B cell (primary cell): ENCODE measurements at regions of chr11 and their contacts with region 1.

Region 1: GRCh38 chr11:18395735-18396504 is 1.6 kb downstream of the LDHA start:
- DNase-seq: peak; percentile 98
- ATAC-seq: peak; percentile 78
- H3K4me3 ChIP-seq: peak overlapping the region; percentile 72 to 96 (median 92)
- H3K4me3 Mint-ChIP-seq: peak overlapping the region; percentile 98
- H3K27ac ChIP-seq: peak overlapping the region; percentile 48 to 71
- H3K27ac Mint-ChIP-seq: peak overlapping the region; percentile 94
- H3K4me1 ChIP-seq: peaks cover 11 to 15% of the 10 kb centered on the region in 2 donors
- H3K4me1 Mint-ChIP-seq: peaks cover 28% of the 10 kb centered on the region
- H3K27me3 ChIP-seq: no peaks in the 10 kb centered on the region
- H3K27me3 Mint-ChIP-seq: no peaks in the 10 kb centered on the region
- CTCF ChIP-seq: no peak

Region 2: GRCh38 chr11:18012863-18013781 is 382.8 kb before region 1 on chr11 and contains the start of gene SERGEF:
- CTCF ChIA-PET with region 1: no interaction called
- POLR2A ChIA-PET with region 1: no interaction called
- intact Hi-C with region 1: loop called (anchors 1 kb)
- DNase-seq: peak; percentile 95
- ATAC-seq: peak; percentile 90
- H3K4me3 ChIP-seq: peak within 1 kb of the TSS; percentile 77 to 90 (median 83)
- H3K4me3 Mint-ChIP-seq: peak within 1 kb of the TSS; percentile 100
- H3K27ac ChIP-seq: peak within 1 kb of the TSS; percentile 61 to 65
- H3K27ac Mint-ChIP-seq: peak within 1 kb of the TSS; percentile 99
- H3K4me1 ChIP-seq: peaks cover 9 to 21% of the 10 kb centered on the region in 2 donors
- H3K4me1 Mint-ChIP-seq: peaks cover 27% of the 10 kb centered on the region
- H3K27me3 ChIP-seq: no peaks in the 10 kb centered on the region
- H3K27me3 Mint-ChIP-seq: no peaks in the 10 kb centered on the region
- CTCF ChIP-seq: no peak
- total RNA-seq, gene SERGEF: 52.5 and 54.3 TPM in 2 replicates

Region 3: GRCh38 chr11:18115360-18116127 is 280.4 kb before region 1 on chr11:
- CTCF ChIA-PET with region 1: no interaction called
- POLR2A ChIA-PET with region 1: no interaction called
- intact Hi-C with region 1: loop called (anchors 2 kb)
- DNase-seq: peak; percentile 81
- ATAC-seq: peak; percentile 91
- H3K4me3 ChIP-seq: no peak overlapping the region
- H3K4me3 Mint-ChIP-seq: no peak overlapping the region
- H3K27ac ChIP-seq: no peak overlapping the region
- H3K27ac Mint-ChIP-seq: no peak overlapping the region
- H3K4me1 ChIP-seq: peaks cover 0 to 5% of the 10 kb centered on the region in 2 donors
- H3K4me1 Mint-ChIP-seq: peaks cover 2% of the 10 kb centered on the region
- H3K27me3 ChIP-seq: peaks cover 0 to 6% (median 1%) of the 10 kb centered on the region in 4 experiments
- H3K27me3 Mint-ChIP-seq: peaks cover 33% of the 10 kb centered on the region
- CTCF ChIP-seq: peak; percentile 90

Region 4: GRCh38 chr11:18383388-18384156 is 12.3 kb before region 1 on chr11:
- CTCF ChIA-PET with region 1: no interaction called
- POLR2A ChIA-PET with region 1: interaction called, 12 read pairs
- intact Hi-C with region 1: loop called (anchors 1 kb)
- DNase-seq: peak; percentile 19
- ATAC-seq: peak; percentile 86
- H3K4me3 ChIP-seq: no peak overlapping the region
- H3K4me3 Mint-ChIP-seq: peak overlapping the region; percentile 37
- H3K27ac ChIP-seq: peak overlapping the region; percentile 60 to 75
- H3K27ac Mint-ChIP-seq: peak overlapping the region; percentile 94
- H3K4me1 ChIP-seq: peaks cover 17 to 18% of the 10 kb centered on the region in 2 donors
- H3K4me1 Mint-ChIP-seq: peaks cover 15% of the 10 kb centered on the region
- H3K27me3 ChIP-seq: no peaks in the 10 kb centered on the region
- H3K27me3 Mint-ChIP-seq: no peaks in the 10 kb centered on the region
- CTCF ChIP-seq: no peak

Region 5: DNA sequence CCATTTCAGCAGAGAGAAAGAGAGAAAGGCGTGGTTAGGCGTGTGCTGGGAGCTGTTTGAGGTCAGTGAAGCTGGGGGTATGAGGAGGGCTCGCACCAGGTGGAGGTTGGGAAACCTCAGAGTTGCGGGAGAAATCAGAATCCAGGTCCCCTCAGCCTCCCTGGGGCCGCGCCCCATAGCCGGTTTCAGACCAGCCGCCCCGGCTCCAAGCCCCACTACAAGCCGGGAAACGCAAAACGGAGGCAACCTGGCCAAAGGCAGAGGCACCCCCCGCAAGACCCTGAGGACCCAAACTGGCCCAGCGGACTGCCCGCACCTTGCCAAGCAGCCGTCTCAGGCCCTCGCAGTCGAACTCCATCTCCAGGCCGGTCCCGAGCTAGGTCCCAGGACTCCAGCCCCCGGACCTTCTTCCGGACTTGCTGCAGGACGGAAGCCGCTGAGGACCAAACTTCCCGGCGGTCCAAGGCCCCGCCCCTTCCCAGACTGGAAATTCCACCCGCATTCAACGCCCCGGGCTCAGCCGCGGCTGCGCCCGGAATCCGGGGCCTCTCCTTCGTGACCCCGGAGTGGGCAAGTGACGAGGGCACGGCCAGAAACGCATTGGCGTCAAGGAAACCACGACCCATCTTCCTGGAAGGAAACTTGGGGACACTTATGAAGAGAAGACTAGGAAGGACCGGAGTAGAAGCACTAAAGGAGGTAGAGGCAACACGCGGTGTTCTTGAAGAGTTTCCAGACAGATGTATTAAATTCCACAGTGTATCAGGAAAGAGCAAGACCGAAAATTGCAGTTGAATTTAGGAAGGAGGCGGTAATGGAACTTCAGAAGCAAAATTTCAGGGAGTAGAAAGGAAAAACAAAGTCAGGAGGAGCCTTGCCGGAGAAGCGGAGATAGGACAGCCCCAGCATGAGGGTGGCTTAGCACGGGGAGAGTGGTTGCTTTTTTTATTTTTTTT is 192.7 kb after region 1 on chr11 and contains the start of gene UEVLD:
- CTCF ChIA-PET with region 1: no interaction called
- POLR2A ChIA-PET with region 1: no interaction called
- intact Hi-C with region 1: no loop called
- DNase-seq: peak; percentile 73
- ATAC-seq: peak; percentile 87
- H3K4me3 ChIP-seq: peak within 1 kb of the TSS; percentile 92 to 97 (median 96)
- H3K4me3 Mint-ChIP-seq: no peak within 1 kb of the TSS
- H3K27ac ChIP-seq: peak within 1 kb of the TSS; percentile 41 to 78
- H3K27ac Mint-ChIP-seq: no peak within 1 kb of the TSS
- H3K4me1 ChIP-seq: peaks cover 13 to 17% of the 10 kb centered on the region in 2 donors
- H3K4me1 Mint-ChIP-seq: peaks cover 3% of the 10 kb centered on the region
- H3K27me3 ChIP-seq: no peaks in the 10 kb centered on the region
- H3K27me3 Mint-ChIP-seq: no peaks in the 10 kb centered on the region
- CTCF ChIP-seq: no peak
- total RNA-seq, gene UEVLD: 12.4 and 12.8 TPM in 2 replicates

Region 6: GRCh38 chr11:18698341-18699268 is 302.7 kb after region 1 on chr11 and contains the start of gene TMEM86A:
- CTCF ChIA-PET with region 1: no interaction called
- POLR2A ChIA-PET with region 1: no interaction called
- intact Hi-C with region 1: loop called (anchors 1 kb)
- DNase-seq: peak; percentile 89
- ATAC-seq: peak; percentile 99
- H3K4me3 ChIP-seq: peak within 1 kb of the TSS; percentile 37 to 71 (median 60)
- H3K4me3 Mint-ChIP-seq: peak within 1 kb of the TSS; percentile 90
- H3K27ac ChIP-seq: peak within 1 kb of the TSS in 1 of 2 donors; percentile 32
- H3K27ac Mint-ChIP-seq: peak within 1 kb of the TSS; percentile 48
- H3K4me1 ChIP-seq: peaks cover 13 to 17% of the 10 kb centered on the region in 2 donors
- H3K4me1 Mint-ChIP-seq: peaks cover 18% of the 10 kb centered on the region
- H3K27me3 ChIP-seq: peaks cover 0 to 17% (median 0%) of the 10 kb centered on the region in 4 experiments
- H3K27me3 Mint-ChIP-seq: peaks cover 16% of the 10 kb centered on the region
- CTCF ChIP-seq: no peak
- total RNA-seq, gene TMEM86A: 0.58 and 1.1 TPM in 2 replicates

Region 7: GRCh38 chr11:20363500-20364411 is 1967.8 kb after region 1 on chr11 and contains the start of gene HTATIP2:
- CTCF ChIA-PET with region 1: no interaction called
- POLR2A ChIA-PET with region 1: no interaction called
- intact Hi-C with region 1: loop called (anchors 10 kb)
- DNase-seq: peak; percentile 80
- ATAC-seq: peak; percentile 92
- H3K4me3 ChIP-seq: peak within 1 kb of the TSS; percentile 75 to 88 (median 80)
- H3K4me3 Mint-ChIP-seq: peak within 1 kb of the TSS; percentile 88
- H3K27ac ChIP-seq: peak within 1 kb of the TSS; percentile 57 to 82
- H3K27ac Mint-ChIP-seq: peak within 1 kb of the TSS; percentile 89
- H3K4me1 ChIP-seq: peaks cover 22 to 31% of the 10 kb centered on the region in 2 donors
- H3K4me1 Mint-ChIP-seq: peaks cover 57% of the 10 kb centered on the region
- H3K27me3 ChIP-seq: no peaks in the 10 kb centered on the region
- H3K27me3 Mint-ChIP-seq: no peaks in the 10 kb centered on the region
- CTCF ChIP-seq: no peak
- total RNA-seq, gene HTATIP2: 30.6 and 31.2 TPM in 2 replicates